Psoas muscle (tissue), 8 donors: ENCODE measurements at regions of chr7 and their contacts with region 1.

Region 1: DNA sequence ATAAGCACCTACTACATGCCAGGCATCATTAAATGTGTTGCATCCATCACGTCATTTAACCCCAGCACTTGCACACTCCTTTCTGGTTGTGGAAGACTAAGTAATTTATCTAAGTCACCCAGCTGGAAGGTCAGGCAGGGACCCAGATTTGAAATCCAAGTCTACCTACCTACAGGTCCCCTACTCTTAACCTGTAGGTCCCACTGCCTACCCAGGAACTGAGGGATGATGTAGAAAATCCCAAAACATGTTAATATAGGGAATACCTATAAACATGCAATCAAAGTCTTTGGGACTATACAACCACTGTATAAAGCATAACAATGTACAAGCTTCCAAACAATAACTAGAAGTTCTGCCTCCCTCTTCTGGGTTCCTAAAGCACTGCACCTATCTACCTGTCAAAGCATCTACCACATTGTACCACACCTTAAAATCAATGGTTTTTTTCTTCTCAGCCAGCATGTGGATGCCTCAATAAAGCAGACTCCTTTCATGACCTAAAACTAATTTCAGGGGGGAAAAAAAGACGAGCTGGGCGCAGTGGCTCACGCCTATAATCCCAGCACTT is 5.6 kb downstream of the IL6 start:
- DNase-seq: no peak
- ATAC-seq: no peak
- H3K4me3 ChIP-seq: no peak overlapping the region
- H3K27ac ChIP-seq: no peak overlapping the region
- H3K4me1 ChIP-seq: no peaks in the 10 kb centered on the region
- H3K27me3 ChIP-seq: no peaks in the 10 kb centered on the region
- CTCF ChIP-seq: peak; percentile 8

Region 2: GRCh38 chr7:22469371-22470143 is 263.1 kb before region 1 on chr7:
- intact Hi-C with region 1: no loop called
- DNase-seq: no peak
- ATAC-seq: no peak
- H3K4me3 ChIP-seq: no peak overlapping the region
- H3K27ac ChIP-seq: no peak overlapping the region
- H3K4me1 ChIP-seq: no peaks in the 10 kb centered on the region
- H3K27me3 ChIP-seq: no peaks in the 10 kb centered on the region
- CTCF ChIP-seq: no peak

Region 3: DNA sequence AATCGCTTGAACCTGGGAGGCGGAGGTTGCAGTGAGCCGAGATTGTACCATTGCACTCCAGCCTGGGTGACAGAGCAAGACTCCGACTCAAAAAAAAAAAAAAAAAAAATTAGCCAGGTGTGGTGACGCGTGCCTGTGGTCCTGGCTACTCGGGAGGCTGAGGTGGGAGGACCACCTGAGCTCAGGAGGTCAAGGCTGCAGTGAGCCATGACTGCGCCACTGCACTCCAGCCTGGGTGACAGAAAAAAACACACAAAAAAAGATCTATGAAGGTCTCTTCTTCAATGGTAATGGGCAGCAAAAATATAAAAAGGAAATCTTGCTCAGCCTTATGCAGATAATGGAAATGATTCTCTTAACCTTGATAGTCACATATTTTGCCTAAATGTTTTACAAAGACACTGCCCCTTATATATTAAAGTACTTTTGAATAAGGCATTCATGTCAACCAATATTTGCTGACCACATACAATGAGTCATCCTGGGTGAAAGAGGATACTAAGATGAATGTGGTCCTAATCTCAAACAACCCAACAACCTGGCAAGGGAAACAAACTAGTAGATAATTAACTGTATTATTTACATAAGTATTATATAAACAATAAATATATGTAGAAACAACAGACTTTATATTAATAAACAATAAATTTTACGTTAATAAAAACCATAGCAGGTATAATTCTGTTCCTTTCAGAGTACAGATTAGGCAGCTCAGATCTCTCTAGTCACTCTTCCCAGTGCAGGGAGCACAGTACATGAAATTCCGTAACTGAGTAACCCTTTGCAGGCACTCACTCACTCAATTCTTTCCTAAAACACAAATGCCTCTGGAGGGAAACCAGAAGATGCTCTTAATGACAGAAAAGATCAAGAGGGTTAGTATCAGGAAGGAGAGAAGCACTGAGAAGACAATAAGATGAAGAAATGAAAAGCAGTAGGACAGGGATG is 81.9 kb after region 1 on chr7:
- intact Hi-C with region 1: loop called in 1 of 2 experiments (anchors 5 kb)
- DNase-seq: no peak
- ATAC-seq: peak in 3 of 4 donors; percentile 55 to 66 (median 64)
- H3K4me3 ChIP-seq: no peak overlapping the region
- H3K27ac ChIP-seq: peak overlapping the region; percentile 32
- H3K4me1 ChIP-seq: peaks cover 60% of the 10 kb centered on the region
- H3K27me3 ChIP-seq: no peaks in the 10 kb centered on the region
- CTCF ChIP-seq: no peak